CD8-positive, alpha-beta memory T cell (primary cell): ENCODE measurements at regions of chr11 and their contacts with region 1.

Region 1: GRCh38 chr11:102390667-102391465 is 43.9 kb downstream of the BIRC2 start:
- DNase-seq: peak; percentile 27 to 71 (median 44)
- H3K4me3 ChIP-seq: no peak overlapping the region
- H3K4me3 Mint-ChIP-seq: no peak overlapping the region
- H3K27ac ChIP-seq: no peak overlapping the region
- H3K27ac Mint-ChIP-seq: peak overlapping the region; percentile 15 to 86 (median 74)
- H3K4me1 ChIP-seq: peaks cover 20% of the 10 kb centered on the region
- H3K4me1 Mint-ChIP-seq: peaks cover 19 to 36% (median 34%) of the 10 kb centered on the region in 3 donors
- H3K27me3 ChIP-seq: no peaks in the 10 kb centered on the region
- H3K27me3 Mint-ChIP-seq: no peaks in the 10 kb centered on the region

Region 2: GRCh38 chr11:102287964-102288724 is 102.7 kb before region 1 on chr11:
- CTCF ChIA-PET with region 1: interaction called, 10 read pairs
- POLR2A ChIA-PET with region 1: no interaction called
- DNase-seq: peak in 4 of 5 donors; percentile 17 to 66 (median 62)
- H3K4me3 ChIP-seq: no peak overlapping the region
- H3K4me3 Mint-ChIP-seq: peak overlapping the region in 1 of 7 donors; percentile 30
- H3K27ac ChIP-seq: no peak overlapping the region
- H3K27ac Mint-ChIP-seq: peak overlapping the region in 4 of 8 donors; percentile 22 to 56 (median 48)
- H3K4me1 ChIP-seq: peaks cover 4% of the 10 kb centered on the region
- H3K4me1 Mint-ChIP-seq: peaks cover 15 to 30% (median 18%) of the 10 kb centered on the region in 3 donors
- H3K27me3 ChIP-seq: no peaks in the 10 kb centered on the region
- H3K27me3 Mint-ChIP-seq: peaks cover 0 to 2% of the 10 kb centered on the region in 2 donors

Region 3: DNA sequence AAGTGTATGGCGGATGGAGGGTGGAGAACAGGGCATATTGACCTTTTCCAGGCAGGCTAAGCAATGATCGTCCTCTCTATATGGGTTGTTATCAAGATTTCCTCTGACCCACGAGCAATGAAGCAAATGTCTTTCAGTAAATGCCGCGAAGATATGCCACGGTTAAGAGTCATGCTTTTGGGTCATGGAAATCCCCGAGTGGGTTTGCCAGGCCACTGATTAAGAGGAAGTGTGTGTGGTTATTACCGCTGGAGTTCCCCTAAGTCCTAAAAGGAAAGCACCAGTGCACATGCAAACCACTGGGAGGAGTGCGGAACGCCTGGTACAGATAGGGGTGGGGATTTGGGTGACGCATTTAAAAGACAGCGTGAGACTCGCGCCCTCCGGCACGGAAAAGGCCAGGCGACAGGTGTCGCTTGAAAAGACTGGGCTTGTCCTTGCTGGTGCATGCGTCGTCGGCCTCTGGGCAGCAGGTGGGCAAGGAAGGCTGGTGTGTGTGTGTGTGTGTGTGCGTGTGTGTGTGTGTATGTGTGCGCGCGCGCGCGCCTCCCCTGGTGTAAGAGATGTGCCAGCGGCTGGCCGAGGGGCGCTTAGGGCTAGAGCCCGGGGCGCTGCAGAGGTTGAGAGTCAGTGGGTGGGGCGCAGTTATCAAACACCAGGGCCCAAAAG is 73.6 kb before region 1 on chr11 and contains the start of gene BIRC3:
- CTCF ChIA-PET with region 1: no interaction called
- POLR2A ChIA-PET with region 1: no interaction called
- DNase-seq: peak; percentile 84 to 97 (median 93)
- H3K4me3 ChIP-seq: peak within 1 kb of the TSS; percentile 89
- H3K4me3 Mint-ChIP-seq: peak within 1 kb of the TSS; percentile 90 to 98 (median 95)
- H3K27ac ChIP-seq: peak within 1 kb of the TSS; percentile 86
- H3K27ac Mint-ChIP-seq: peak within 1 kb of the TSS; percentile 92 to 100 (median 99)
- H3K4me1 ChIP-seq: peaks cover 58% of the 10 kb centered on the region
- H3K4me1 Mint-ChIP-seq: peaks cover 68 to 79% (median 69%) of the 10 kb centered on the region in 3 donors
- H3K27me3 ChIP-seq: no peaks in the 10 kb centered on the region
- H3K27me3 Mint-ChIP-seq: peaks cover 0 to 3% of the 10 kb centered on the region in 2 donors
- total RNA-seq, gene BIRC3: 191 to 199 TPM

Region 4: DNA sequence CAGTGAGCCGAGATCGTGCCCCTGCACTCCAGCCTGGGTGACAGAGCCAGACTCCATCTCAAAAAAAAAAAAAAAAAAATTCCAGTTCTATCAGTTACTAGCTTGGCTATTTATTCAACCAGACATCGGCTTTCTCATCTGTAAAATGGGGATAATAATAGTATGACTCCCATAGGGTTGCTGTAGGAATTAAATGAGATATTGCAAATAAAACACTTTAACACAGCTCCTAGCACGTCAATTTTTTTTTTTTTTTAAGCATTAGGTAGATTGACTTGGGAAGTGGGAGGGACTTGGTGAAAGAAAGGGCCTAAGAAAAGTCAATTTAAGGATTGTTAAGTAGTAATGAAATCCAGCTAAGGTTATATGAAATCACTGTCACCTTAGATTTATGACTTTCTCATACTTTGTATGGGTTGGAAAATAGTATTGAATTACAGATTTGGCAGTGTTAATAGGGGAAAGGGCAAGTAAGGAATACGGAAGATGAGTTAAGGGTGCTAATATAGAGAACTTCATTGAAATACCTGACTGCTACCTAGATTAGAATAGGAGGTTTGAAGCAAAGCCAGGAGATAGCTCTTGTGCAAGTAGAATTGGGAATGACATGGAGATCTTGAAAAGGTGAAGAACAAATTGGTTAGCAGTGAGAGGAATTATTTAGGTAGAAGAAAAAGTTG is 15.0 kb before region 1 on chr11:
- CTCF ChIA-PET with region 1: interaction called, 31 read pairs
- POLR2A ChIA-PET with region 1: interaction called, 3 read pairs
- DNase-seq: no peak
- H3K4me3 ChIP-seq: no peak overlapping the region
- H3K4me3 Mint-ChIP-seq: no peak overlapping the region
- H3K27ac ChIP-seq: no peak overlapping the region
- H3K27ac Mint-ChIP-seq: peak overlapping the region in 4 of 8 donors; percentile 6 to 41 (median 25)
- H3K4me1 ChIP-seq: peaks cover 13% of the 10 kb centered on the region
- H3K4me1 Mint-ChIP-seq: peaks cover 16 to 31% (median 28%) of the 10 kb centered on the region in 3 donors
- H3K27me3 ChIP-seq: no peaks in the 10 kb centered on the region
- H3K27me3 Mint-ChIP-seq: no peaks in the 10 kb centered on the region

Region 5: GRCh38 chr11:102451681-102452460 is 61.0 kb after region 1 on chr11:
- CTCF ChIA-PET with region 1: interaction called, 40 read pairs
- POLR2A ChIA-PET with region 1: interaction called, 7 read pairs
- DNase-seq: peak; percentile 57 to 82 (median 73)
- H3K4me3 ChIP-seq: peak overlapping the region; percentile 72
- H3K4me3 Mint-ChIP-seq: peak overlapping the region; percentile 92 to 97 (median 97)
- H3K27ac ChIP-seq: peak overlapping the region; percentile 76
- H3K27ac Mint-ChIP-seq: peak overlapping the region; percentile 88 to 96 (median 94)
- H3K4me1 ChIP-seq: peaks cover 58% of the 10 kb centered on the region
- H3K4me1 Mint-ChIP-seq: peaks cover 64 to 84% (median 81%) of the 10 kb centered on the region in 3 donors
- H3K27me3 ChIP-seq: no peaks in the 10 kb centered on the region
- H3K27me3 Mint-ChIP-seq: no peaks in the 10 kb centered on the region

Region 6: GRCh38 chr11:102495161-102496042 is 104.5 kb after region 1 on chr11:
- CTCF ChIA-PET with region 1: interaction called, 37 read pairs
- POLR2A ChIA-PET with region 1: no interaction called
- DNase-seq: peak in 4 of 5 donors; percentile 8 to 74 (median 61)
- H3K4me3 ChIP-seq: no peak overlapping the region
- H3K4me3 Mint-ChIP-seq: peak overlapping the region in 1 of 7 donors; percentile 48
- H3K27ac ChIP-seq: no peak overlapping the region
- H3K27ac Mint-ChIP-seq: peak overlapping the region in 1 of 8 donors; percentile 23
- H3K4me1 ChIP-seq: peaks cover 5% of the 10 kb centered on the region
- H3K4me1 Mint-ChIP-seq: peaks cover 0 to 8% (median 6%) of the 10 kb centered on the region in 3 donors
- H3K27me3 ChIP-seq: no peaks in the 10 kb centered on the region
- H3K27me3 Mint-ChIP-seq: peaks cover 4 to 29% of the 10 kb centered on the region in 2 donors

Region 7: DNA sequence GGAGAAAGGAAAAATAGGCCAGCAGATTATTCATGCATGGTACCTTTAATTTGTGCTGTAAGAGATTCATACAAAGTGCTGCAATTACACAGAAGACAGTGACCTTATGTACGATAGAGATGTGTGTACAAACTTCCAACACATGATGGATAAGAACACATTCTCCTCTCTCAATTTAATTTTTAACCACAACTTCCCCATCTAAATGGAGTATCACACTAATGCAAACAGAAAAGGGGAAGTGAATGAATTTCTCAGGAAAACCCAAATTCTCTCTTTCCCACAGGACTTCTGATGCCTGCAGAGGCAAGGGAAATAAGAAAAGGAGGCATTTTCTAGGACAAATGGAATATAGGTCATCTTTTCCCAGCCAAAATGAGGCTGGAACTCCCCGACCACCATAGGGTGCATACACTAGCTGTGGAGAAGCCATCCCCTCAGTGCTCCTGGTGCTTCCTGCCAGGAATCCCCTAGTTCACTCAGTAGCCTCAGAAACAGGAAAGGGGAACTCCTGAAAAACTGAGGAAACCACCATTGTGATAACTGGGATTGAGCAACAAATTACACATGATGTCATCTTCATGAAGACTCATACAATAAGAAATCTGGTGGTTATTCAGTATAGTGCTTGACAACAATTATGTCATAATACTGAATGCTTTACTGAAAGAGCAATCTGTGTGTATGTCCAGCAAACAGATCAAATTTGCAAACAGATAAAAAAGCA is 367.1 kb after region 1 on chr11:
- CTCF ChIA-PET with region 1: no interaction called
- POLR2A ChIA-PET with region 1: no interaction called
- DNase-seq: no peak
- H3K4me3 ChIP-seq: no peak overlapping the region
- H3K4me3 Mint-ChIP-seq: no peak overlapping the region
- H3K27ac ChIP-seq: no peak overlapping the region
- H3K27ac Mint-ChIP-seq: no peak overlapping the region
- H3K4me1 ChIP-seq: no peaks in the 10 kb centered on the region
- H3K4me1 Mint-ChIP-seq: no peaks in the 10 kb centered on the region
- H3K27me3 ChIP-seq: no peaks in the 10 kb centered on the region
- H3K27me3 Mint-ChIP-seq: peaks cover 9 to 37% of the 10 kb centered on the region in 2 donors